Psoas muscle (tissue), 8 donors: ENCODE measurements at regions of chr7 and their contacts with region 1.

Region 1: DNA sequence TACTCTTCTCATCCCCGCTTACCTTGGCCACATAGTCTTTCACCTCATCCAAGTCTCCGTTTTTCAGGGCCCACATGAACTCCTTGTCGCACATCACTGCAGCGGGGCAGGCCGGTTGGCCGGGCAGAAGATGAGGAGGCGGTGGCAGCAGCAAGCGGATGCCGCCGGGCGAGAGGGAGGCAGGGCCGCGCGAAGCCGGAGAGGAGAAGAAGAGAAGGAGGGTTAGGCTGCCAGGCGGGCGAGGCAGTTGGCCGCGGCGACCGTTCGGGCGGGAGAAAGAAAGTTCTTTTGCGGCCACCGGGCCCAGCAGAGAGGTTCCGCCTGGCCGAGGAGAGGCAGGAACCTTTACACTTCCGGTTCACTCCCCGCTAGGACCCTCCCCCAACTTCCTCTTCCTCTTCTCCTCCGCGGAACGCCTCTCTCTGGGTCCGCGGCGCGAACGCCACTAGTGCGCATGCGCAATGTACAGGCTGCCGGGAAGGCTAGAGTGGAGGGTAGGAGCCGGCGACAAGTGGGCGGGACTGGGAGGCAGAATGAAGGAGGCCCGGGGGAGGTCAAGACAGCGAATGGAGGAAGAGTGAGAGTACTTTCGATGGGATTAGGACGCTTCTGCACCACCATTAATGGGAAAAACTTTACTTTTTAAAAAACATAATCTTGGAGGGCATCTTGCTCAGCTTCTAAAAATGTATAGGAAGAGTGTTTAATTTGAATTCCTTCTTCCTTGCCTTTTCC is at the start of gene MTPN:
- DNase-seq: peak; percentile 99
- ATAC-seq: peak; percentile 98 to 100 (median 99)
- H3K4me3 ChIP-seq: peak within 1 kb of the TSS; percentile 93
- H3K27ac ChIP-seq: peak within 1 kb of the TSS; percentile 91
- H3K4me1 ChIP-seq: peaks cover 49% of the 10 kb centered on the region
- H3K27me3 ChIP-seq: no peaks in the 10 kb centered on the region
- CTCF ChIP-seq: no peak
- total RNA-seq, gene MTPN: 57.1 to 75.2 (median 60.1) TPM

Region 2: GRCh38 chr7:135662373-135663114 is 314.6 kb before region 1 on chr7 and contains the start of gene STMP1:
- intact Hi-C with region 1: loop called (anchors 5 to 10 kb)
- DNase-seq: peak; percentile 97 to 98
- ATAC-seq: peak; percentile 99
- H3K4me3 ChIP-seq: peak within 1 kb of the TSS; percentile 100
- H3K27ac ChIP-seq: peak within 1 kb of the TSS; percentile 98
- H3K4me1 ChIP-seq: peaks cover 36% of the 10 kb centered on the region
- H3K27me3 ChIP-seq: no peaks in the 10 kb centered on the region
- CTCF ChIP-seq: no peak
- total RNA-seq, gene STMP1: 23.9 to 28.0 (median 24.9) TPM